A549 (cell line): ENCODE measurements at regions of chr11 and their contacts with region 1.

Region 1: GRCh38 chr11:20127671-20128527 is 32.4 kb downstream of the DBX1 start:
- DNase-seq: peak; percentile 66 to 70
- ATAC-seq: peak; percentile 87 to 93
- H3K4me3 ChIP-seq: no peak overlapping the region
- H3K27ac ChIP-seq: peak overlapping the region; percentile 59 to 61; a peak in 5 of 6 replicates
- H3K4me1 ChIP-seq: peaks cover 16% of the 10 kb centered on the region; the same call in 2 of the 3 replicates
- CTCF ChIP-seq: peak; percentile 83
- EP300 ChIP-seq: no peak
- POLR2A ChIP-seq: no peak
- RAD21 ChIP-seq: peak; percentile 86 to 94

Region 2: GRCh38 chr11:19903620-19904069 is 224.3 kb before region 1 on chr11:
- CTCF ChIA-PET with region 1: interaction called, 96 read pairs
- POLR2A ChIA-PET with region 1: interaction called, 3 read pairs
- DNase-seq: peak; percentile 52 to 75
- ATAC-seq: peak; percentile 80 to 93; a peak in 5 of 6 replicates
- H3K4me3 ChIP-seq: no peak overlapping the region
- H3K27ac ChIP-seq: no peak overlapping the region
- H3K4me1 ChIP-seq: no peaks in the 10 kb centered on the region
- CTCF ChIP-seq: peak; percentile 92
- EP300 ChIP-seq: no peak
- POLR2A ChIP-seq: no peak
- RAD21 ChIP-seq: peak; percentile 92 to 95

Region 3: GRCh38 chr11:19938169-19938856 is 189.6 kb before region 1 on chr11:
- CTCF ChIA-PET with region 1: interaction called, 84 read pairs
- POLR2A ChIA-PET with region 1: no interaction called
- DNase-seq: peak; percentile 63 to 69
- ATAC-seq: peak; percentile 67 to 93; a peak in 5 of 6 replicates
- H3K4me3 ChIP-seq: no peak overlapping the region
- H3K27ac ChIP-seq: peak overlapping the region in 1 of 2 experiments; percentile 35; a peak in 1 of 6 replicates
- H3K4me1 ChIP-seq: peaks cover 12% of the 10 kb centered on the region; the same call in 2 of the 3 replicates
- CTCF ChIP-seq: peak; percentile 90
- EP300 ChIP-seq: no peak
- POLR2A ChIP-seq: no peak
- RAD21 ChIP-seq: peak; percentile 83 to 86

Region 4: GRCh38 chr11:20022363-20023081 is 105.4 kb before region 1 on chr11:
- CTCF ChIA-PET with region 1: interaction called, 13 read pairs
- POLR2A ChIA-PET with region 1: no interaction called
- DNase-seq: peak; percentile 33 to 50
- ATAC-seq: peak; percentile 57 to 72; a peak in 4 of 6 replicates
- H3K4me3 ChIP-seq: peak overlapping the region; percentile 49
- H3K27ac ChIP-seq: peak overlapping the region; percentile 91 to 92
- H3K4me1 ChIP-seq: peaks cover 73% of the 10 kb centered on the region
- CTCF ChIP-seq: no peak
- EP300 ChIP-seq: no peak
- POLR2A ChIP-seq: no peak
- RAD21 ChIP-seq: no peak

Region 5: GRCh38 chr11:20097319-20098221 is 30.3 kb before region 1 on chr11:
- CTCF ChIA-PET with region 1: interaction called, 20 read pairs
- POLR2A ChIA-PET with region 1: no interaction called
- DNase-seq: no peak
- ATAC-seq: no peak; a peak in 1 of 6 replicates
- H3K4me3 ChIP-seq: no peak overlapping the region
- H3K27ac ChIP-seq: peak overlapping the region in 1 of 2 experiments; percentile 37; a peak in 1 of 6 replicates
- H3K4me1 ChIP-seq: peaks cover 12% of the 10 kb centered on the region
- CTCF ChIP-seq: no peak
- EP300 ChIP-seq: no peak
- POLR2A ChIP-seq: no peak
- RAD21 ChIP-seq: no peak

Region 6: DNA sequence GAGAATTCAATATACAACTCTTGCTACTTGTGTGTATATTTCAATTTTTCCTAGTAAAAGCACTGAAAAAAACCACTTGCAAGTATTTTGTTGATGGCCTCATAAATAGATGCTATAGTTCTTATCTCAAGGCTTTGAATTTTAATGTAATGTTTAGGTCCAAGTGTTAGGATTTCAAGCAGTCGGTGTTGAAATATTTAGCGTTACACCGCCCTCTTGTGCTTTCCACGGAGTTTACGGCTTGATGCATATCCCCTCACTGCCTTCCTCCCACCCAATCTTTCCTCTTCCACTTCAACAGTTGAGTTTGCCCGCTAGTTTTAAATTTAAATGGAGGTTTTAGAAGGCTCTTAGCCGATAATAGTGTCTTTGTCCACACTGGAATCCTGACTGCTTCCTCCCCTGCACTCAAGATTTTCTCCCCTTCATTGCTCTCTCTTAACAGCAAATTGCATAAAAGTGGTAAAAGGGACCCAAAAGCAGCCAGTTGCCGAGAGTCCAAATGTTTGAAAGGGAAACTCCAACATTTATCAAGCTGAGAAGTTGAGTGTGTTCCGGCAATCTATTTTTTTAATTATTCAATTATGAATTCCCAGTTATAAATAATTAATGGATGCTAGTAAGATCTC is 209.7 kb after region 1 on chr11:
- CTCF ChIA-PET with region 1: interaction called, 11 read pairs
- POLR2A ChIA-PET with region 1: no interaction called
- DNase-seq: peak; percentile 38 to 42
- ATAC-seq: peak; percentile 86 to 89; a peak in 5 of 6 replicates
- H3K4me3 ChIP-seq: no peak overlapping the region
- H3K27ac ChIP-seq: no peak overlapping the region
- H3K4me1 ChIP-seq: no peaks in the 10 kb centered on the region
- CTCF ChIP-seq: peak; percentile 63
- EP300 ChIP-seq: no peak
- POLR2A ChIP-seq: no peak
- RAD21 ChIP-seq: peak; percentile 67 to 70